Transverse colon (tissue), 4 donors: ENCODE measurements at regions of chr1 and their contacts with region 1.

Region 1: GRCh38 chr1:168335500-168335899 is 54.8 kb downstream of the TBX19 start:
- DNase-seq: no peak
- H3K4me3 ChIP-seq: no peak overlapping the region
- H3K27ac ChIP-seq: no peak overlapping the region
- H3K4me1 ChIP-seq: peaks cover 0 to 4% (median 0%) of the 10 kb centered on the region in 4 donors
- H3K27me3 ChIP-seq: no peaks in the 10 kb centered on the region
- CTCF ChIP-seq: no peak
- EP300 ChIP-seq: no peak
- POLR2A ChIP-seq: no peak

Region 2: DNA sequence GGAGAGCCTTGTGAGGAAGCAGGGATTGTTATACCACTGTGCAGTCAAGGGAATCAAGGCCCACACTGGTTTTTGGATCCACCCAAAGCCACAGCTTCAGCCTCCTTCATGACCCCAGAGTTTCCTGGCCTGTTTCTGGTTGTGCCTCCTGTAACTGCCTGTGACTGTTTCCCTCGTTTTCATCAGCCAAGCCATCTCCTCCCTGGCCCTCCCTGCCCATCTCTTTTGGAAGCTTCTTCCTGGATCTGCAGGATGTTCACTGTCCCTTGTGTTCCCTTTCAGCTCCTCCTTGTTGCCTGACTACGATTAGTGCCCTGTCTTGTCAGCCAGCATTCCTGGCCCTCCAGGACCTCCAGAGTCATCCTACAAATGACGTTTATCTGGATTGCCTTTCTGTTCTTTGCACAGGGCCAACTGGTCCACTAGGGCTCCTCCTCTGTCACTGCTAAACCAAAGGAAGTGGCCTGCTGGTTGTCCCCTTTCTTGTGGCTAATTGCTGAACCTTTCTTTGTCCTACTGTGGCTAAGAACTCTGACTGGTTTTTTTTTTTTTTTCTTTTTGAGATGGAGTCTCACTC is 91.8 kb before region 1 on chr1:
- in situ Hi-C with region 1: no loop called
- intact Hi-C with region 1: no loop called
- DNase-seq: no peak
- H3K4me3 ChIP-seq: no peak overlapping the region
- H3K27ac ChIP-seq: peak overlapping the region; percentile 50 to 83 (median 58)
- H3K4me1 ChIP-seq: peaks cover 8 to 24% (median 18%) of the 10 kb centered on the region in 4 donors
- H3K27me3 ChIP-seq: no peaks in the 10 kb centered on the region
- CTCF ChIP-seq: no peak
- EP300 ChIP-seq: no peak
- POLR2A ChIP-seq: no peak

Region 3: GRCh38 chr1:168452329-168452728 is 116.8 kb after region 1 on chr1:
- in situ Hi-C with region 1: no loop called
- intact Hi-C with region 1: no loop called
- DNase-seq: no peak
- H3K4me3 ChIP-seq: no peak overlapping the region
- H3K27ac ChIP-seq: no peak overlapping the region
- H3K4me1 ChIP-seq: peaks cover 0 to 8% (median 0%) of the 10 kb centered on the region in 4 donors
- H3K27me3 ChIP-seq: no peaks in the 10 kb centered on the region
- CTCF ChIP-seq: no peak
- EP300 ChIP-seq: no peak
- POLR2A ChIP-seq: no peak

Region 4: GRCh38 chr1:169367486-169368405 is 1032.2 kb after region 1 on chr1 and contains the starts of genes BLZF1 and NME7:
- in situ Hi-C with region 1: no loop called
- intact Hi-C with region 1: loop called (anchors 10 kb)
- DNase-seq: peak; percentile 98
- H3K4me3 ChIP-seq: peak within 1 kb of the TSS; percentile 52 to 84 (median 67)
- H3K27ac ChIP-seq: peak within 1 kb of the TSS; percentile 84 to 91 (median 87)
- H3K4me1 ChIP-seq: peaks cover 5 to 26% (median 22%) of the 10 kb centered on the region in 4 donors
- H3K27me3 ChIP-seq: no peaks in the 10 kb centered on the region
- CTCF ChIP-seq: no peak
- EP300 ChIP-seq: no peak
- POLR2A ChIP-seq: peak; percentile 50
- total RNA-seq, gene BLZF1: 14.5 to 33.3 (median 28.1) TPM
- total RNA-seq, gene NME7: 1.9 to 15.9 (median 8.3) TPM